ENCODE measurements at regions of chr22 and their contacts with region 1.

Region 1: GRCh38 chr22:41285820-41286638 is at the start of gene RANGAP1:
- DNase-seq: peak; percentile 96

Region 2: DNA sequence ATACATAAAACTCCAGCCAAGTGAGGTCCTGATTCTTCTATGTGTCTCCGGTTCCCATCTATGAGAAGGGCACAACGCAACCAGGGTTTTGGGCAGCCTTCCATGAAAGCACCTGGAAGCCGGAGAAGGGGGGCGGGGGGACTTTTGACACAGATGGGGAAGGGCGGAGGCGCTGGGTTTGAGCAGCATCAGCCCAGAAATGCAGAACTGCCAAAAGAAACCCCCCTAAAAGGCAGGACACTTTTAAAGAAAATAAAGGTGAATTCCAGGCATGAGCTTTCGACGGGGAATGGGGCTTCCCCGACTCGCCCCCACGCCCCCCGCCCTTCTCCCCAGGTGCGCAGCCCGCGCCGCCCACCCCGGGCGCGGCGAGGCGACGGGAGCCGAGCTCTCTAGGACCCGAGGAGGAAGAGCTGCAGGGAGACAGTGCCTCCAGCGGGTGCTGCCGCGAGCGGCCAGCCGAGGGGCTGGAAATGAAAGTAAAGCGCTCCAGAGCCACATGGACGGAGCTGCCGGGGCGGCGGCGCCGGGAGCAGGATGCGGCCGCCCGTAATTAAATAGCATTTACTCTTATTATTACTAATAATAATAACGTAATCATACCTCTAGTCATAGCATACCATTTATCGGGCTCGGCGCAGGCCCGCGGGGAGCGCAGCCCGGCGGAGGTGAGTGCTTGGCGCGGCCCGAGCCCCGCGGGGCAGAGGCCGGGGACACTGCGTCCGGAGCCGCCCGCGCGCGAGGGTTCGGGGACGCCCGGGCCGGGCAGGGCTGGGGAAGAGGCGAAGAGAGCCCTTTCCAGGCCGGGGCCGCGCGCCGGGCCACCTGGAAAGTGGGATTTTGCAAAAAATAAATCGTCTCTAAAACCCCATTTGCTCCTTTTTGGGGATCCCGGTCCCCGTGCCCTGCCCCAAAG is 15.3 kb after region 1 on chr22 and contains the start of gene ZC3H7B:
- CTCF ChIA-PET with region 1: interaction called, 3 read pairs
- POLR2A ChIA-PET with region 1: interaction called, 13 read pairs
- DNase-seq: peak; percentile 91

Region 3: DNA sequence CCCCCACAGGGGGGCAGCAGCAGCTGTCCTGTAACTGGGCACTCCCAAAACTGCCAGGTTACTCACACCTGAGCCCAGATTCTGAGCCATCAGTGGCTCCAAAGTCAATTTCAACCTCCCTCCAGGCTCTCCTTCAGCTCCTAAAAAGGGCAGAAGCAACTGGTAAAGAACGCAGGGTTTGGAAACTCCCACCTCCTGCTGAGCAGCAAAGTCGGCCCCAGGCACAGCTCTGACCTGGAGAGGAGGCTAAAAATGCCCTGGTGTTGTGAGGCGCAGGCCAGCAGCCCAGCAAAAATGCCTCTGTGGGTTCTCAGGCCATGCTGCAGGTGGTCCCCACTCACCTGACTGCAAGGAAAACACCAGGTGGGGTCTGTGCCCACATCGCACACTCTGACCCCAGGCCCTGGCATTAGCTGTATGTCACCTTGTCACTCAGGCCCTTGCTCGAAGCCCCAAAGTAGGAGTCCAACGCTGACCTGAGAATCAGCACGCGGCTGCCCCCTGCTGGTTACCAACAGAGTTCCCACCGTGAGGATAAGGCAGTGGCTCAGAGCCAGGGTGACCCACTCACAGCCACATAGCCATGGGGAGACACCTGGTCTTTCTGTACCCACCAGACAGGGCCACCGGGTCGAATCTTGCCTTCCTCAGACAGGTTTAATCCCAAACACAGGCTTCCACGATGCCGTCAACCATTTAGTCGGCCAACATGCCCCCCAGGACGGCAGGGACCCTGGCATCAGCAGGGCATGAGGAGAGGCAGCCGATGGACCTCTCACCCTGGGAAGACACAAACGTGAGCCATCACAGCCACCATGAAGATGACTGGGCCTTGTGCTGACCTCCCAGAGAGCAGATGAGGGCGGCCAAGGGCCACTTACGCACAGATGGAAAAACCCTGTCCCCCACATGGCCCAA is 247.1 kb after region 1 on chr22:
- CTCF ChIA-PET with region 1: no interaction called
- POLR2A ChIA-PET with region 1: no interaction called
- DNase-seq: peak; percentile 76